ENCODE measurements at regions of chr1 and their contacts with region 1.

Region 1: DNA sequence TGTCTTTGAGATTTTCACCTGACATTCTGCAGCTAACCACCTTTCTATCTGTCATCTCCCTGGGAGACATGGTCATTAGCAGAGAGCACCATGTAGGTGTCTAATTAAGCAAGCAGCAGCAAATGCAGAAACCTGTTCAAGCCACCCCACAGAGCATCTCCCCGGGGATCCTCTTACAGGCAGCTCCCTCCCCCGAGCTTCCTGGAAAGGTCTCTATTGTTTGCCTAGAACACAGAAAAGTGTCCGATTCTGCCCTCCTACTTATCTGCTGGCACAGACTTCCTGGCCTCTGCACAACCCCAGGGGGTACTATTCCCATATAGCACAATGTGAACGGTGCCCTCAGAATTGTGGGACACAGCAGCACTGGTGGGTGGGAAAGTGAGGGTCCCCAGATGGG is 46.1 kb downstream of the PLEKHA6 start:
- DNase-seq: no peak
- ATAC-seq: no peak
- H3K4me3 ChIP-seq: no peak overlapping the region
- H3K4me3 Mint-ChIP-seq: peak overlapping the region in 2 of 3 donors; percentile 13 to 62
- H3K27ac ChIP-seq: no peak overlapping the region
- H3K27ac Mint-ChIP-seq: no peak overlapping the region
- H3K4me1 ChIP-seq: no peaks in the 10 kb centered on the region
- H3K4me1 Mint-ChIP-seq: peaks cover 10 to 17% (median 13%) of the 10 kb centered on the region in 3 donors
- H3K27me3 ChIP-seq: peaks cover 0 to 6% of the 10 kb centered on the region in 2 experiments
- H3K27me3 Mint-ChIP-seq: peaks cover 10 to 12% of the 10 kb centered on the region in 2 donors

Region 2: DNA sequence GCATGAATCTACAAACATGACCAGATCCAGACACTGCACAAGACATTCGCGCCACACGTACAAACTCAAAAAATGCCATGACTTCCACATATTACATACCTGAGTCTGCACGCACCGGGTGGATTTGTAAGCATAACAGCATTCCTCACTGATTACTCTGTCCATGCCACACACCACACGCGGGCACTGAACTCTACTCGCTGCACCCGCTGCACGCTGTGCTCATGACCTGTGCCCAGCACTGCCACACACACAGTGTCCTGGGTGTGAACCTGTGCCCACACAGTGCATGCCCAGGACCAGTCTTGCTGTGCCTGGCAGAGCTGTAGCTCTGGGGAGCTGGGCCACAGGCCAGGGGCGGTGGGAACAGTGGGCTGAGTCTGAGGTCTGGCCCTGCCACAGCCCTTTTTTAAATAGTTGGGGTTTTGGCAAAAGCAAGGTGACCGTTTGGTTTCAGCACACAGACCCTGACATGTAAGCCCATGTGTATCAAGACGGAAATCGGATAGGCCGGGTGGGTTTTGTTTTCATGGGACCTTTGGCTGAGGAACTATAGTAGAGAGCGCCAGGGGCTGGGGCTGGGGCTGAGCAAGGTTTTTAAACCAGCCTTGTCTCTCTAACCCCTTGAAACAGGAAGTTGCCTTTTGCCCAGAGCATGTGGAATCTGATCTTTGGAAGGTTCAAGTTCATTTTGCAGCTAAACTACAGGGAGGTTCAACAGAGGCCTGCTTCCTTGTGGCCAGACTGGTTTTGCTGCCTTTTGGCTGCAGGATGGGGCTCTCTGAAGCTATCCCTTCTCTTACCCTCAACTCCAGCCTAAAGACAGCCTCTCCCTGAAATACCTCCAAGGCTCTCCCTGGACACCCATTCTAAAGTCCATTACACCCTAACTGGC is 87.6 kb before region 1 on chr1:
- CTCF ChIA-PET with region 1: interaction called in 1 of 2 experiments, 13 read pairs
- POLR2A ChIA-PET with region 1: no interaction called
- DNase-seq: no peak
- ATAC-seq: no peak
- H3K4me3 ChIP-seq: no peak overlapping the region
- H3K4me3 Mint-ChIP-seq: no peak overlapping the region
- H3K27ac ChIP-seq: no peak overlapping the region
- H3K27ac Mint-ChIP-seq: no peak overlapping the region
- H3K4me1 ChIP-seq: no peaks in the 10 kb centered on the region
- H3K4me1 Mint-ChIP-seq: no peaks in the 10 kb centered on the region
- H3K27me3 ChIP-seq: peaks cover 0 to 15% of the 10 kb centered on the region in 2 experiments
- H3K27me3 Mint-ChIP-seq: no peaks in the 10 kb centered on the region

Measured in T-cell (primary cell).